GM18951 (cell line): ENCODE measurements at regions of chr20 and their contacts with region 1.

Region 1: GRCh38 chr20:46520976-46521579 is 7.7 kb upstream of the ZNF334 start:
- POLR2A ChIP-seq: no peak

Region 2: DNA sequence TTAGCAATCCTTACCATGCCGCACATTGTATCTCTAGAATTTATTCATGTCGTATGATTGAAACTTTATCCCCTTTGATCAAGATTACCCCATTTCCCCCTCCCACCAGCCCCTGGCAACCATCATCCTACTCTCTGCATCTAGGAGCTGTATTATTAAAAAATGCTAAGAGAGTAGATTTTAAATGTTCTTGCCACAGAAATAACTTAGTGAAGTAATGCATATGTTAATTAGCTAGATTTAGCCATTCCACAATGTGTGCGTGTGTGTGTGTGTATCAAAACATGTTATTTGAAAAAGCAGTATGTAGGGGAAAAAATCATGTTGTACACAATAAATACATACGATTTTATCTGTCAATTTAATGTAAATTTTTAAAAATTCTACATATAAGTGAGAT is 993.8 kb before region 1 on chr20:
- in situ Hi-C with region 1: no loop called
- POLR2A ChIP-seq: no peak

Region 3: GRCh38 chr20:46689082-46689754 is 168.1 kb after region 1 on chr20 and contains the start of gene TP53RK:
- in situ Hi-C with region 1: loop called (anchors 10 kb)
- POLR2A ChIP-seq: peak; percentile 71

Region 4: GRCh38 chr20:46905364-46906125 is 384.5 kb after region 1 on chr20:
- in situ Hi-C with region 1: no loop called
- POLR2A ChIP-seq: no peak